Activated naive CD4-positive, alpha-beta T cell treated with anti-CD3 and anti-CD28 coated beads for 36 hours (primary cell): ENCODE measurements at regions of chr10 and their contacts with region 1.

Region 1: GRCh38 chr10:87861953-87862678 is 1.2 kb downstream of the KLLN start:
- DNase-seq: peak; percentile 95
- H3K4me3 Mint-ChIP-seq: peak overlapping the region; percentile 96
- H3K27ac Mint-ChIP-seq: peak overlapping the region; percentile 95
- H3K4me1 Mint-ChIP-seq: peaks cover 33% of the 10 kb centered on the region
- H3K27me3 Mint-ChIP-seq: peaks cover 3% of the 10 kb centered on the region

Region 2: GRCh38 chr10:87878664-87879459 is 16.7 kb after region 1 on chr10:
- CTCF ChIA-PET with region 1: interaction called, 4 read pairs
- intact Hi-C with region 1: loop called (anchors 1 kb)
- DNase-seq: no peak
- H3K4me3 Mint-ChIP-seq: no peak overlapping the region
- H3K27ac Mint-ChIP-seq: no peak overlapping the region
- H3K4me1 Mint-ChIP-seq: peaks cover 38% of the 10 kb centered on the region
- H3K27me3 Mint-ChIP-seq: no peaks in the 10 kb centered on the region

Region 3: DNA sequence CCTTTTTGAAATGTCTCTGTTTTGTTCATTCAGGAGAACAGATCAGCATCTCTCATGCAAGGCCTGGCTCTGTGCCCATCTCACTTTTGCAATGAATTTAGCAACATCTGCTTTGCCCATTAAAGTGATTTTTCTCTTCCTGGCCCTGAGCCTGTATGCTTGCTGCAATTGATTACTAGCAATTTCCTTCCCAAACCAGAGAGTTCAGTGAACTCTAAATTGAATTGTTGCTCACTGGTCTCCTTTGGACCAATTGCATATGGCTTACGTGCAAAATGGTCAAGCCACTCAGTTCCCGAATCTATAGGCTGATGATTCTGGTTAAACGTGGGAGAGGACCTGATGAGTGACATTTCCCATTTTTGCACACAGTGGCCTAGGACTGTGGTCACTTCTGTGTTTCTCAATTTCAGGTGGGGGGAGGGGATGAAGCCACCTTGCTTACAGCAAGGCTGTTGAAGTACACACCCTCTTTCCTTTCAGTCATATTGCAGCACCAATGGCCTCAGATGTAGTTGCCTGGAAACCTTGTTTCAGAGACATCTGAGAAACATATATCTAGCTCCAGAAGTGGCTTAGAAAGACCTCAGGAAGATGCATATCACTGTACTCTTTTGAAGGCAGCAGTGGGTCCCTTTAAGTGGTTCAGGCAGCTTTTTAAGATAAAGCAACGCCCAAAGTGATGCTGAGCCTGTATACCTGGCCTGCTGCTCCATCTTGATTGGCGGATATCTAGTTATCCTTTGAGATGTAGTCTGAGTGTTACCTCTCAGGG is 202.7 kb after region 1 on chr10:
- CTCF ChIA-PET with region 1: interaction called, 8 read pairs
- intact Hi-C with region 1: loop called (anchors 1 kb)
- DNase-seq: peak; percentile 34
- H3K4me3 Mint-ChIP-seq: no peak overlapping the region
- H3K27ac Mint-ChIP-seq: no peak overlapping the region
- H3K4me1 Mint-ChIP-seq: peaks cover 68% of the 10 kb centered on the region
- H3K27me3 Mint-ChIP-seq: peaks cover 11% of the 10 kb centered on the region

Region 4: DNA sequence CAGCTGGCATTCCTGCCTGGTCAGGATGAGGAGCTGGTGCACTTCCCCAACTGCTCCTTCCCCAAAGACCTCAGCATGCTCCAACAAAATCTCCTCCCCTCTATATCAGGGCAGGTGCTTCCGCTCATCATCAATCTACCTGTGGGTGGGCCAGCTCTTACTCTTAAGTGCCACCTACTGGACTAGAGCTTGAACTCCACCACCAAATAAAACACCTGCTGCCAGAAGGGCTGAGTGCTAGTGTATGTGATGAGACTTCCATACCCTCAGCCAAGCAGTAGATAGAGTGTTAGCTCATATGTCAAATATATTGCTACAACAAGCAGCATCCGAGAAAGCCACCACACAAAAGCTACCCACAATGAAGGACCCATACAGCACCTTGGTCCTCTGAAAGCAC is 456.7 kb after region 1 on chr10:
- CTCF ChIA-PET with region 1: interaction called, 3 read pairs
- intact Hi-C with region 1: loop called (anchors 2 kb)
- DNase-seq: no peak
- H3K4me3 Mint-ChIP-seq: no peak overlapping the region
- H3K27ac Mint-ChIP-seq: no peak overlapping the region
- H3K4me1 Mint-ChIP-seq: no peaks in the 10 kb centered on the region
- H3K27me3 Mint-ChIP-seq: no peaks in the 10 kb centered on the region

Region 5: DNA sequence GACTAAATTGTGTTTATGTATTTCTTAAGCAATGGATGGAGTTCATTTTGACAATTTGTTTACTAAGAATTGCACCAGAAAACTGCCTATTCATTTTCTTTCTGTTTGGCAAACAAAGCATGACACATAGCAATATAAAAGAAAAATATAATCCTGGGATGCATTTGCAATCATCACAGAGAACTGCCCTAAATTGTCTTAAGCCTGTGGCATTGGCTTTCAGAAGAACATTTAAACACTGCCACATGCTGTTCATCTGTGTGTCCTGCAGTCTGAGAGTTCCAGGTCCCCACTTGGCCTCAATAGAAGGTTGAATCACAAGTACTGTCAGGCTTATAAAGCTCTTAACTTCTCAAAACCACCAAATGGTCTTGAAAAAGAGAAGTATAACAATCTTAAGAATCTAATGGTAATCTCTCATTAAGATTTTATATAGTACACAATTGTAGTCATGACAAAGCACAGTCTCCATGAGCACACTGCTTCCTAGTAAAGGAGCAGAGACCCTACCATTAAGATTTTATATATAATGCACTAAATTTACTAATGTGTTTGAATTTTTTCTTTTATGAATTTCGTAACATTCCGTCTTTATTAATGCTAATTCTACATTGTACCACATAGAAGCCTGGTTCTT is 691.1 kb after region 1 on chr10:
- CTCF ChIA-PET with region 1: interaction called, 8 read pairs
- intact Hi-C with region 1: loop called (anchors 1 kb)
- DNase-seq: peak; percentile 54
- H3K4me3 Mint-ChIP-seq: no peak overlapping the region
- H3K27ac Mint-ChIP-seq: no peak overlapping the region
- H3K4me1 Mint-ChIP-seq: no peaks in the 10 kb centered on the region
- H3K27me3 Mint-ChIP-seq: no peaks in the 10 kb centered on the region